GM23248 (cell line): ENCODE measurements at regions of chr15 and their contacts with region 1.

Region 1: GRCh38 chr15:51649659-51650521 is 27.3 kb upstream of the DMXL2 start:
- DNase-seq: peak; percentile 76
- H3K4me3 ChIP-seq: no peak overlapping the region
- H3K27ac ChIP-seq: no peak overlapping the region
- H3K4me1 ChIP-seq: peaks cover 5% of the 10 kb centered on the region; the same call in 1 of the 2 replicates
- H3K27me3 ChIP-seq: no peaks in the 10 kb centered on the region; the same call in 1 of the 2 replicates

Region 2: DNA sequence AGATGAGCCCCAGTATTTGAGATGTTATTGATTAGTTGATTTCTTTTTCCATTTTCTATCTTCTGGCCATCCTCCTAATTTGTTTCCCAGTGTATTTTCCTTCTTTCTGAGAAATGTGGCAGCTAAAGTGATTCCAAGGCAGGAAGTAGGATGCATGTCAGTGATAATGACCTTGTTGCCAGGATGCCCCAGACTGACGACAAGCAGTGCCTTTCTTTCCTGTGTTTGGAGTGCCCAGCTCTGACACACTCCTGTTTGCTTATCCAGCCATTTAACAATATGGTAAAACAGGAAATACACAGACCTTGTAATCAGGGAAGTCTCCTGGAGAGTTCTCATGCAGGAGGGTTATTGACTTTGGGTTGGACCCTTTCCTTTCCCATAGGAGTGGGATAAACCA is 121.9 kb after region 1 on chr15:
- in situ Hi-C with region 1: loop called (anchors 5 kb)
- DNase-seq: no peak
- H3K4me3 ChIP-seq: no peak overlapping the region
- H3K27ac ChIP-seq: no peak overlapping the region
- H3K4me1 ChIP-seq: no peaks in the 10 kb centered on the region
- H3K27me3 ChIP-seq: no peaks in the 10 kb centered on the region